Astrocyte of the cerebellum (primary cell): ENCODE measurements at regions of chr17 and their contacts with region 1.

Region 1: DNA sequence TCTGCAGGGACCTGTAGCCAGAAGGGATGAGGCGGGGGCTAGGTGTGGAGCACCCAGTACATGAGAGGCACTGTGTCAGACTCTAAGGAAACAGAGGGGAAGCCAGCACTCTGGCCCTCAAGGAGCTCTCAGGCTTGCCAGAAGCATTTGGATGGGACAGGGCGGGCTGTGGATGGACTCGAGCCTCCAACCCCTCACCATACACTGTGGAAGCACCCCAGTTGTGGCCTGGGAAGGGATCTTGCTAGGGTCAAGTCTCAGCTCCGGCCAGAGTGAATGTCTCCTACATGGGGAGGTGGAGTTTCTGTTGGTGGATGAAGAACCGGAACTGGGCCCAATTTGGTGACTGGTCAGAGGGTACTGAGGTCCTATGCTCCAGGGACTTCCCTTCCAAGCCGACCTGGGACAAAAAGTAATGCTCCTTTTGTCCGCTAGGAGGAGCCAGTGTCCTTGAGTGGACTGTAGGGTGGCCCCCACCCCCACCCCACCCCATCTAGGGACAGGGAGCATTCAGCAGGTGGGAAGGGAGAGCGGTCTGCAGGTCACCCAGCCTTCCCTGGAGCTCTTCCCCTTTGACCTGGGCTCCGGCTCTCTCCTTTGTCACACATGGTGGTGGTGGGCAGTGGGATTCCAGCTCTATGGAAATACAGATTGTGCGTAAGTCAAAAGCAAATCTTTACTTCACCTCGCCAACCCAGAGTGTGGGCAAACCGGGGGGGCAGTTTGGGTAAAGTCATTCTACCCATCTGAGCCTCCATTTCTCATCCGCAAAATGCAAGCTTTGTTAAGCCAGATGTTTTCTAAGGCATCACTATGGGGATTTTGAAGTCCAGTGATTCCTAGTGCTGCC is 20.4 kb upstream of the PHB1 start:
- DNase-seq: no peak
- H3K4me3 ChIP-seq: no peak overlapping the region
- CTCF ChIP-seq: peak; percentile 69

Region 2: DNA sequence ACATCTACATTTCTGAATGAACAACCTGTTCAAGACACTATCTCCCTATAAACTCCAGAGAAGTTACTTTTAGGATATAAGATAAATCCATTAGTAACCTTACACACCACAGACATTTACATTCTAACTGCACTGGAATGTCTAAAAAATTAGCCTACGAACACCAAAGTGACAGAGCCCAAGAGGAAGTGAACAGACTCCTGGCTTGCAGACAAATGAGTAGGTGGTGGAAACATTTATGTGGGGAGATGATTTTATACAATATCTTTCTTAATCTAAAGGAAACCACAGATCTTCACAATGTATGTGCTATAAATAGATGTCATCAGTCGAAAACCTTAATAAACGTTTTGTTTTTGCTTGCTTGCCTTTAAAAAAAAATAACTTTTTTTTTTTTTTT is 91.8 kb before region 1 on chr17:
- in situ Hi-C with region 1: no loop called
- DNase-seq: no peak
- H3K4me3 ChIP-seq: no peak overlapping the region
- CTCF ChIP-seq: no peak

Region 3: GRCh38 chr17:49477709-49478108 is 42.7 kb after region 1 on chr17:
- in situ Hi-C with region 1: loop called (anchors 5 kb)
- DNase-seq: no peak
- H3K4me3 ChIP-seq: no peak overlapping the region
- CTCF ChIP-seq: no peak

Region 4: GRCh38 chr17:49501504-49501903 is 66.5 kb after region 1 on chr17:
- in situ Hi-C with region 1: loop called (anchors 5 kb)
- DNase-seq: no peak
- H3K4me3 ChIP-seq: no peak overlapping the region
- CTCF ChIP-seq: no peak